Activated CD4-positive, alpha-beta memory T cell treated with anti-CD3 and anti-CD28 coated beads, Interleukin-2, amount 10 ng/mL, durations not matched to agents 7 days and 5 days (primary cell): ENCODE measurements at regions of chr6 and their contacts with region 1.

Region 1: DNA sequence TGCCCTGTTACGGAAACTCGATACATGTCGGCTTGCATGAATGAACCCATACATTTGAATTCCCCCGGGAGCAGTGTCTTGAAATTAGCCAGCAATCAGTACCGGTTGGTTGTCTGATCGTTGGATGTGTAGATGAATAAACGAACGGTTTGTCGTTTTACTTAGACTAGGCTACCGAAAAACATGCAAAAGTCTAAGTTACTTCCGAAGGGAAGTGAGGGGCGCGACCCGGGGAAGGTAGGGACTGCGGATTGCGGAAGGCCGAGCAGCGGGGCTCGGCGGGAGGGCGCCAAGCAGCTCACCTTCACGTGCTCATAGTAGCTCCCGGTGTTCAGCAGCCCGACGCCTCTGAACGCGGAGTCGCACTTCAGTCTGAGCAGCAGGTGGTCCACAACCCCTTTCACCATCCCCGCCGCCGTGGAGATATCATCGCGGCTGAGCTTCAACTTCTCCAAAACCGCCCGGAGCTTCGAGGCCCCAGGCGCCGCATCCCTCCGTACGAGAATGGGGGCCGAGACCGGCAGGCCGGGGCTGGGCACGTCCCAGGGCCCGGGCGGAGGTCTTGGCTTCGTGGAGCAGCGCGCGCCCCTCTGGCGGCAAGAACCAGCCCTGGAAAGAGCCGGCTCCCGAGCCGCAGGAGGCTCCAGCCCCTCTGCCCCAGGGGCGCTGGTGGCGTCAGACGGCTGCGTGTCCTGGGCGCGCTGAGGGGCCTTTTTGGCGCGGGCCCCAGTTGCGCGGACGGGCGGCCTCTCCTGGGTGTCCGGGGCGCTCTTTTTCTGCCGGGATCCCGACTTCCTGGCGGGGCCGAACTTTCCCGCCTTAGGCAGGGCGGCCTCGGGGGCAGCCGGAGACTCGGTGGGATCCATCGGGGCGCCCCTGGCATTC is 632 bp downstream of the CGAS start:
- DNase-seq: peak; percentile 57
- H3K4me3 Mint-ChIP-seq: peak overlapping the region; percentile 95
- H3K27ac Mint-ChIP-seq: peak overlapping the region; percentile 86
- H3K4me1 Mint-ChIP-seq: peaks cover 50% of the 10 kb centered on the region
- H3K27me3 Mint-ChIP-seq: no peaks in the 10 kb centered on the region

Region 2: DNA sequence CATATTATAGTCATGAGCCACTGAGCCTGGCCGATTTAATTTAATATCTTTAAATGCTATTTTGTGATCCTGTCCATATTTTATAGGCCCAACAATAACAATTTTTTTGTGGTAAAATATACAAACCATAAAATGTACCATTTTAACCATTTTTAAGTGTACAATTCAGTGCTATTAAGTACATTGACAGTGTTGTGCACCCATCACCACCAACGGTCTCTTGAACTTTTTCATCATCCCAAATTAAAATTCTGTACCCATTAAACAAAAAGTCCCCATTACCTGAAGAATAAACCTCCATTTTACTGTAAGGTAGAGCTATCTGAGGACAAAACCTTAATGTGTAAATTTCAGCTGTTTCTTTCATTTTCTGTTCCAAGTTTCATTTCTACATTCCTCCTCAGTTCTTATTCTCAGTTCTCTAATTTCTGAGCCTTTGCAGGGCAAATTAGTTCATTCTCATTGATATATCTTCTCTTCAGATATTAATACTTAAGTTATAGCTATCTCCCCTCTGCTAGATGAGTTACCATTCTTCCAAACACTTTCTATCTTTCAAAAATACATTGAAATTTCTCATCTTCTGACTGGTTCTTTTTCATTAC is 20.3 kb after region 1 on chr6:
- CTCF ChIA-PET with region 1: interaction called, 8 read pairs
- POLR2A ChIA-PET with region 1: interaction called, 41 read pairs
- DNase-seq: no peak
- H3K4me3 Mint-ChIP-seq: peak overlapping the region; percentile 73
- H3K27ac Mint-ChIP-seq: peak overlapping the region; percentile 88
- H3K4me1 Mint-ChIP-seq: peaks cover 30% of the 10 kb centered on the region
- H3K27me3 Mint-ChIP-seq: no peaks in the 10 kb centered on the region